CD8-positive, alpha-beta T cell (primary cell): ENCODE measurements at regions of chr11 and their contacts with region 1.

Region 1: GRCh38 chr11:3984896-3985295 is 109.7 kb upstream of the RRM1 start:
- DNase-seq: peak in 7 of 9 experiments; percentile 12 to 72 (median 54)
- ATAC-seq: peak; percentile 77
- H3K4me3 ChIP-seq: no peak overlapping the region
- H3K4me3 Mint-ChIP-seq: no peak overlapping the region
- H3K27ac ChIP-seq: no peak overlapping the region
- H3K27ac Mint-ChIP-seq: peak overlapping the region; percentile 92
- H3K4me1 ChIP-seq: peaks cover 78% of the 10 kb centered on the region
- H3K4me1 Mint-ChIP-seq: peaks cover 91% of the 10 kb centered on the region
- H3K27me3 ChIP-seq: no peaks in the 10 kb centered on the region
- H3K27me3 Mint-ChIP-seq: no peaks in the 10 kb centered on the region
- CTCF ChIP-seq: peak; percentile 21

Region 2: DNA sequence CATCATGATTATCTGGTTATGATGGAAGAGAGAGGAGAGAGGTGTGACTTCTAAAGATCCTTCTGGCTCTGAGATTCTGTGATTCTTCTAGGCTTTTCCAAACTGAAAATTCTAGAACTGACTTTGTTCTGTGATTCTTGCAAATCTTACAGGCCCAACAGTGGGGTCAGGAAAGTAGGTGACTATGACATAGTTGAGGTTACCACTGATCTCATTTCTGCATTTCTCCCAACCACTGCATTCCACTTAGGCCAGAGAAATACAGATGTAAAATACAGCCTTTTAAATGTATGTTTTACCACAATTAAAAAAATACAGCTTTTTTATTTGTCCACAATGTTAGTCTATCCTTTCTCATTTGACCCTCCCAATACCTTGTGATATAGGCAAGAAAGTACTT is 45.7 kb before region 1 on chr11:
- CTCF ChIA-PET with region 1: interaction called, 7 read pairs
- POLR2A ChIA-PET with region 1: no interaction called
- intact Hi-C with region 1: loop called in 1 of 2 experiments (anchors 5 kb)
- DNase-seq: no peak
- ATAC-seq: peak; percentile 26
- H3K4me3 ChIP-seq: no peak overlapping the region
- H3K4me3 Mint-ChIP-seq: no peak overlapping the region
- H3K27ac ChIP-seq: no peak overlapping the region
- H3K27ac Mint-ChIP-seq: peak overlapping the region; percentile 78
- H3K4me1 ChIP-seq: peaks cover 61% of the 10 kb centered on the region
- H3K4me1 Mint-ChIP-seq: peaks cover 92% of the 10 kb centered on the region
- H3K27me3 ChIP-seq: no peaks in the 10 kb centered on the region
- H3K27me3 Mint-ChIP-seq: no peaks in the 10 kb centered on the region
- CTCF ChIP-seq: no peak

Region 3: DNA sequence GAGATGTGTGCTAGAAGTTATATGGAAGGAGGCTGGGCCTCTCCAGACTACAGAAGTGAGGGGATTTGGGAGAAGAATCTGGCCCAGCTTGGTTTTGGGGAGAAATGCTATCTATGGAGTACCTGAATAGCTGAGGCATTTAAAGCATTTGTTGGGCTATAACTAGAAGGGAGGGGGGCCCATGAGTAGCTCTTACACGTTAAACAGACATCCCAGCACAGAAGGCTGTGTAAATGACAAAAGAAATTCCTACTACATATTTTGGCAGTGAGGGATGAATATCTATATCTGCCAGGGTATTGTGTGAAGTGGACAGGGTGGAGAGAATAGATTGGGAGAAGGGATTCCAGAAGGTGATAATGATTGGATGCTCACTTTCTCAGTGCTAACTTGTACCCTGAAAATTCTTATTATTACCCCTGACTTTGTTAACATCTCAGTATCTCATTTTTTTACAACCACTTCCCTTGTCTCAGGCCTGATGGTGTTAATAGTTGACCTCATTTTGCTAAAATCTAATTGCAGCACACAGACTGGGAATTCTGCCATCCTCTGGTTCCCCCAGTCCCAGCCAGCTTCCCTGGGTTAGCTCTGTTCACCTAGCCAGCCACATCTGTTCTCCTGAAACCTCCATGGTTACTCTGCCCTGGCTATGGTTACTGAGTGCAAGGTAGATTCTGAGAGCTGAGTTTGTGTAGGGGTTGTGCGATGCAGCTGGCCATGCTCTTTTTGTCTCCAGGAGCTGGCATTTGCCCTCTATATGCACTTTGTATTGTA is 80.9 kb after region 1 on chr11:
- CTCF ChIA-PET with region 1: no interaction called
- POLR2A ChIA-PET with region 1: no interaction called
- intact Hi-C with region 1: loop called (anchors 5 kb)
- DNase-seq: no peak
- ATAC-seq: no peak
- H3K4me3 ChIP-seq: no peak overlapping the region
- H3K4me3 Mint-ChIP-seq: no peak overlapping the region
- H3K27ac ChIP-seq: peak overlapping the region in 1 of 2 experiments; percentile 32
- H3K27ac Mint-ChIP-seq: peak overlapping the region; percentile 84
- H3K4me1 ChIP-seq: peaks cover 53% of the 10 kb centered on the region
- H3K4me1 Mint-ChIP-seq: peaks cover 64% of the 10 kb centered on the region
- H3K27me3 ChIP-seq: no peaks in the 10 kb centered on the region
- H3K27me3 Mint-ChIP-seq: no peaks in the 10 kb centered on the region
- CTCF ChIP-seq: no peak